GM10248 (cell line): ENCODE measurements at regions of chr12 and their contacts with region 1.

Region 1: GRCh38 chr12:69475237-69475984 is 5.2 kb downstream of the FRS2 start:
- DNase-seq: no peak
- CTCF ChIP-seq: no peak

Region 2: DNA sequence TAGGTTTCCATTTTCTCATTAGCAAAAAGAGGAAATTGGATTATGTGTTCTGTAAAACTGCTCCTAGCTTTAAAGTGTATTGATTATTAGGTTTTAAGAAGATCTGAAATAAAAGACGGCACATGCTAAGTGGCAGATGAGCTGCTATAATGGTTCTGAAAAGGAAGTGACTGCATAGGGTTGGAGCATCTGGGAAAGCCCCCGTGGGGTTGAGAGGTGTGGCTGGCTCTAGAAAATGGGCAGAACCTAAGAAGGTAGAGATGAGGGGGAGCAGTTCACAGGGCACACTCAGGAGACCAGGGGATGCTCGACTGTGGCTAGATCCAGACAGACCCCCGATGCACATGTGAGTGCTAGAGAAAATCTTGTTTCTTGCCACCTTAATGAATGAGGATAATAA is 1484.3 kb before region 1 on chr12:
- CTCF ChIA-PET with region 1: no interaction called
- POLR2A ChIA-PET with region 1: no interaction called
- DNase-seq: peak; percentile 24
- CTCF ChIP-seq: no peak

Region 3: GRCh38 chr12:69534389-69534822 is 59.0 kb after region 1 on chr12:
- CTCF ChIA-PET with region 1: no interaction called
- POLR2A ChIA-PET with region 1: interaction called, 18 read pairs
- DNase-seq: peak; percentile 47
- CTCF ChIP-seq: no peak